ENCODE measurements at regions of chr2 and their contacts with region 1.

Region 1: GRCh38 chr2:7845332-7845731 is 836.5 kb upstream of the ID2 start:
- DNase-seq: no peak
- H3K4me3 Mint-ChIP-seq: no peak overlapping the region
- H3K27ac Mint-ChIP-seq: peak overlapping the region; percentile 81
- H3K4me1 Mint-ChIP-seq: peaks cover 64% of the 10 kb centered on the region
- H3K27me3 Mint-ChIP-seq: no peaks in the 10 kb centered on the region

Region 2: DNA sequence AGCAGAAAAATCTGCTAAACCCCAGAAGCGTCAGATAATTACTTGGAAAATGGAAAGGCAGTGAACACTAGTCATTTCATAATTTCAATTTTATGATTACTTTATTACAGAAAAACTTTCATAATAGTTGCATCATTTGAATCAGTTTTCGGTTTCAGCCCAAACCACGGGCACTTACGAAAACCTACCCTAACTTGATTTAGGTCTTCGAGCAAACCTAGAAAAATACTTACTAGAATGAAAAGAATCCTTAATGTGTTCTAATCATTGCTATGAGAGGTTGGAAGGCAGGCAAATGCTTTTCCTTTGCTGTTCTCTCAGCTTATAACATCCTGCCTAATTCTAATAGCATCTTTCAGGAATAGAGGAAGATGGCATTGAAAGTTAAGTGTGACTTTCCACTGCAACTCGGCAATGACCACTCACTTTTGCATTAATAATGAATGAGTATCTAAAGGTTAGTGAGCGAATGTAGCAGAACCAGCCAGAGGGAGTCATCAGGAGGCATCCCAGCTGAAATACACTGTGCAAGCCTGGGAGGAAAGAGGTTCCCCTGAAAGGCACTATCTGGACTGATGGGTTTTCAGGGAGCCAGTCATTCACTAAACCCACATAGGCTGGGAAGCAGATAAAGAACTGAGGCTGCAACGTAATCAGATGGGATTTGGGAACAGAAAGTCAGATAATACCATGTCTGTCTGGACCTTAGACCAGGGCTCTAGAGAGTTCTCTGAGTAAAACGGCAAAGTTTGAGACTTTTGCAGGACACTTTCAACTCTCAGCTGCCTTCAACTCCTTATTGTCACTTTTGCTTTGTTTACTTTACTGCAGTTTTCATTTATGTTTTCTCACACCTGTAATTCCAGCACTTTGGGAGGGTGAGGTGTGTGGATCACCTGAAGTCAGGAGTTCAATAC is 407.4 kb before region 1 on chr2:
- intact Hi-C with region 1: loop called (anchors 2 kb)
- DNase-seq: no peak
- H3K4me3 Mint-ChIP-seq: peak overlapping the region; percentile 39
- H3K27ac Mint-ChIP-seq: peak overlapping the region; percentile 95
- H3K4me1 Mint-ChIP-seq: peaks cover 79% of the 10 kb centered on the region
- H3K27me3 Mint-ChIP-seq: no peaks in the 10 kb centered on the region

Region 3: DNA sequence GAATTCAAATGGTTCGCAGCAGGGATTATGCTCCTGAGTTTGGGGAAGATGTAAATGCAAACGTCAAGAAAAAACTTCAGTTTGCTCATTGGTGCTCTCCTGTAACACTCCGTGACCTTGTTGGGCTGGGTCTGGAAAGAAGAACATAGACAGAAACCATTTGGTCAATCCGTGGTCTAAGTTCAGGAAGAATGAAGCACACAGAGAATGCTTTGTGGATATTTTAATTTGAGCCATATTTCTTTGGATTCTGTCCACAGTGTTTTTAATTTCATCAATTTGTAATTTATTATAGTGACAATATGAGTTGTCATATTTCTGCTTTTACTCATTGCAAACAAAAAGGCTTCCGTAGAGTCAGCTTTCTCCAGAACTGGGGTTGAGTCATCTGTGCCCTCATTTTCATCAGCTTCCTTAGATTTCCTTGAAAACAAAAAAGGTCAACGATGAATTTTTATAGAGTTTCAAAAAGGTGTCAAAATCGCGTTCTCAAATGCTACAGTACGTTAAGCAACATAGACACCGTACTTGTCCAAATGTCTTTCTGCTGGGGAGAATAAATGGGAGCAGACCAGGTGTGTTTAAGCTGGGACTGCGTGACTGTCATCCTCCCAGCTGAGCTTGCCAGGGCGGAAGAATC is 321.7 kb before region 1 on chr2:
- intact Hi-C with region 1: loop called (anchors 5 kb)
- DNase-seq: no peak
- H3K4me3 Mint-ChIP-seq: peak overlapping the region; percentile 46
- H3K27ac Mint-ChIP-seq: peak overlapping the region; percentile 88
- H3K4me1 Mint-ChIP-seq: peaks cover 69% of the 10 kb centered on the region
- H3K27me3 Mint-ChIP-seq: no peaks in the 10 kb centered on the region

Region 4: GRCh38 chr2:7758073-7758759 is 87.1 kb before region 1 on chr2:
- intact Hi-C with region 1: loop called (anchors 5 kb)
- DNase-seq: no peak
- H3K4me3 Mint-ChIP-seq: no peak overlapping the region
- H3K27ac Mint-ChIP-seq: peak overlapping the region; percentile 78
- H3K4me1 Mint-ChIP-seq: peaks cover 18% of the 10 kb centered on the region
- H3K27me3 Mint-ChIP-seq: no peaks in the 10 kb centered on the region

Region 5: DNA sequence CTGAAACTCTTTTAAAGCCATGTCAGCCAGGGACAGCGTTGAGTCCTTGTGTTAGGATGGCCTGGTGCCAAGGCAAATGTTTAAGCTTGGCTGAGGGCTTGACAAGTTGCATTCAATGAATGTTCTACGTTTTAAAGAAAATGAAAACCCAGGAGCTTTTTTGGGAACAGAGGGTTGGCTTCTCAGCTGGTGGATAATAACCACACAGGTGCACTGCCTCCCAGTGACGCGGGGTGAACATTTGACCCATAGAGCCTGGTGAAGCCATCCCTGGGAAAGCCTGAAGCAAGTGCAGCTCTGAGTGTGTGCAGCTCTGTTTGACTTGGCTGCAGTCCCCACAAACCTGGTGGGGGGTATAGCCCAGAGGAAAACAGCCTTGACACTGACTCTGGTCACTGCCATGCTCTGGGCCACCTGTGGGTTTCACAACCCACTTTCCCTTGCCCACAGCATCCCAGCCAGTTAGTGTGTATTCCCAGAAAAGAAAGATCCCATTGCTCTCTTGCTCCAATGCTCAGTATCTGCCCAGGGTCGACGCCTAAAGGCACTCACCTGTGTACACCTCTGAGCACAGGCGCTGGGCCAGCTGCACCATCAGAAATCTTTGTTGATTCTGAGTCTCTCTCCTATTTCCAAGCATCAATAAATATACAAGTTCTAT is 53.2 kb before region 1 on chr2:
- intact Hi-C with region 1: no loop called
- DNase-seq: no peak
- H3K4me3 Mint-ChIP-seq: no peak overlapping the region
- H3K27ac Mint-ChIP-seq: no peak overlapping the region
- H3K4me1 Mint-ChIP-seq: peaks cover 7% of the 10 kb centered on the region
- H3K27me3 Mint-ChIP-seq: no peaks in the 10 kb centered on the region

Region 6: GRCh38 chr2:7819860-7820259 is 25.5 kb before region 1 on chr2:
- intact Hi-C with region 1: no loop called
- DNase-seq: no peak
- H3K4me3 Mint-ChIP-seq: no peak overlapping the region
- H3K27ac Mint-ChIP-seq: no peak overlapping the region
- H3K4me1 Mint-ChIP-seq: peaks cover 7% of the 10 kb centered on the region
- H3K27me3 Mint-ChIP-seq: no peaks in the 10 kb centered on the region

Region 7: DNA sequence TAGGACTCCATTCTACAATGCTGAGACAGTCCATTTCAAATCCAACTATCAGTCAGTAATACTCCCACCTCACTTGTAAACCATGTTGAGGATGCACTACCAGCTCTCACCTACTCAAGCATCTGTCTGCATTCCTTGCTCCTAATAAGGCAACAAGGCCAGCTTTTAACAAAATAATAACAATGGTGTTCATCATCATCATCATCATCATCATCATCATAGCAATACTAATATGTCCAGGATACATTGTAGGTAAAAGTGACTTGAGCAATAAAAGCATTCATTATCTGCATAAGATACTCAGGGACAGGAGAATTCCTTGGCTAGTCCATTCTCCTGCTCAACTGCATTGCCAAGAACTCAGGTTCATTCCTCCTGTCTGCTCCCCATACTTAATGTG is 93.0 kb after region 1 on chr2:
- intact Hi-C with region 1: loop called (anchors 2 kb)
- DNase-seq: no peak
- H3K4me3 Mint-ChIP-seq: no peak overlapping the region
- H3K27ac Mint-ChIP-seq: no peak overlapping the region
- H3K4me1 Mint-ChIP-seq: peaks cover 35% of the 10 kb centered on the region
- H3K27me3 Mint-ChIP-seq: no peaks in the 10 kb centered on the region

Region 8: GRCh38 chr2:8303322-8303832 is 458.0 kb after region 1 on chr2:
- intact Hi-C with region 1: loop called (anchors 5 kb)
- DNase-seq: peak; percentile 82
- H3K4me3 Mint-ChIP-seq: peak overlapping the region; percentile 49
- H3K27ac Mint-ChIP-seq: peak overlapping the region; percentile 47
- H3K4me1 Mint-ChIP-seq: peaks cover 81% of the 10 kb centered on the region
- H3K27me3 Mint-ChIP-seq: no peaks in the 10 kb centered on the region